ENCODE measurements at regions of chr5 and their contacts with region 1.

Region 1: GRCh38 chr5:18393589-18394442 is 759.6 kb downstream of the TAF11L14 start:
- DNase-seq: peak; percentile 43 to 94 (median 78)

Region 2: DNA sequence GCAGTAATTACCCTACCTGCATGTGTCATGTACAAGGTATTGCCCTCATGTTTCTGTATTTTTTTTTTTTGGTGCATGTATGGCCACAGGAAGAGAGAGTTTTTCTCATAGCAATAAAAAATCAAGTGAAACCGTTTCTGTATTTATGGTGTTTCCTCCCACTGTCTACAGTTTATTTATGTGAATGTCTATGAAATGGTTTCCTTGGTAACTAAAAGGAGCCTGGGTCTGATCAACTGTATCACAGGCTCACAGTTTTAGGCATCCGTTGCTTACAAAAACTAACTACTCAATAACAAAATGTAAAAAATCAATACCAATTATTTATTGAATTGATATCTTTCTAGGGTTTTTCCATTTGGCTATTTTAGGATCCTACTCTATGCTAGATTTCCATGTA is 295.1 kb before region 1 on chr5:
- intact Hi-C with region 1: no loop called
- DNase-seq: no peak

Region 3: GRCh38 chr5:19615661-19616060 is 1221.8 kb after region 1 on chr5:
- intact Hi-C with region 1: loop called (anchors 10 kb)
- DNase-seq: no peak